Dorsolateral prefrontal cortex (tissue), 120 donors: ENCODE measurements at regions of chr7 and their contacts with region 1.

Region 1: GRCh38 chr7:78510580-78511188 is 712.1 kb downstream of the PHTF2 start:
- DNase-seq: peak in 5 of 10 donors; percentile 38 to 47 (median 44)
- H3K4me3 ChIP-seq: no peak overlapping the region
- H3K27ac ChIP-seq: peak overlapping the region in 8 of 59 donors; percentile 9 to 52 (median 32)
- H3K27me3 ChIP-seq: no peaks in the 10 kb centered on the region
- CTCF ChIP-seq: peak; percentile 36 to 92 (median 68)

Region 2: GRCh38 chr7:78924581-78924980 is 413.9 kb after region 1 on chr7:
- intact Hi-C with region 1: loop called in 1 of 2 experiments (anchors 10 kb)
- DNase-seq: no peak
- H3K4me3 ChIP-seq: no peak overlapping the region
- H3K27ac ChIP-seq: no peak overlapping the region
- H3K27me3 ChIP-seq: no peaks in the 10 kb centered on the region
- CTCF ChIP-seq: peak in 39 of 56 donors; percentile 6 to 54 (median 31)

Region 3: DNA sequence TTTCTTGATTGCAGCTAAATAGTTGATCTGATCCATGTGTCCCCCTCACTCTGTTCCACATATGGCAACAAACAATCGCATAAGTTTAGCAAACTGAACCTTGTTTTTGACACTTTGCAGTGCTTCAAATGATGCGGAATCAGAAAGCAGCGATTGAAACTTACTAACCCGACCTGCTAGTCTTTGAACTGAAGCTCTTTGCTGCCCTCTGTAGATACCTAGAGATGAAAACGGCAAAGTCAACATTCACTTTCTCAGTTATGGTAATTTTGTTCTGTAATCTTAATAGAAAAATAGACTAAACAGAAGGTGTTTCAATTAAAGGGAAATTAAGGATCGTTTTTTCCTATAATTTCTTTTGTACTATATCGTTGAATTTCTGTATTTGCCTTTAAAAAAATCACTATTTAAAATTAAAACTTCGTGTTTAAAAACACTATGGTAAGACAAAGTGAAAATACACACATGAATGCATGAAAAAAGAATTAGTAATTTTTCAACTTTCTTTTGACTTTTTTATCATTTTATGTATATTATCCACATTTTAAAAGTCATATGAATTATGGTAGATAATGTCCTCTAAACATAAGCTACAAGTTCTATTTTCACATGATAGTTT is 666.3 kb after region 1 on chr7:
- intact Hi-C with region 1: loop called in 1 of 2 experiments (anchors 5 kb)
- DNase-seq: peak in 2 of 10 donors; percentile 13 to 21
- H3K4me3 ChIP-seq: peak overlapping the region in 17 of 59 donors; percentile 3 to 39 (median 13)
- H3K27ac ChIP-seq: no peak overlapping the region
- H3K27me3 ChIP-seq: no peaks in the 10 kb centered on the region
- CTCF ChIP-seq: peak in 55 of 56 donors; percentile 40 to 88 (median 71)